GM10248 (cell line): ENCODE measurements at regions of chr4 and their contacts with region 1.

Region 1: DNA sequence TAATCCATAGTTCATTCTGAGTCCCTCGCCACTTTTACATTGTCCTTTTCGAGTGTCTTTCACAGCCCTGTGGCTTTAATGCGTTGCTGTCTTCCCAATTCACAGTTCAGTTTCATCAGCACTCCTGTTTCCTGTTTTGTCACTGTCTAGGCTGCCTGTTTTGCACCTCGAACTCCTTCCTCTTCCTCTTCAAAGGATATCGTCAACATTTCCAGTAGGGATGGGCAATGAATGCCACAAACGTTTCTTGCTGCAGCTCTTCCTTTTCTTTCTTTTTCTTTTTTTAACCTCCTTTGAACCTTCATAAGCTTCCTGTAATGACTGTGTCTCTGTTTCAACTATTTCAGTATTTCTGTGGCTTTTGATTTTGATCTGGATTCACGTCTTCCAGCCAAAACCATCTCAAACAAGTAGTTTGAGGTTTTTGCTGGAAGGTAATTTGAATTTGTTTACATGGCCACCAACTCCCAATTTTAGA is 105.4 kb downstream of the ANXA3 start:
- DNase-seq: no peak
- CTCF ChIP-seq: no peak

Region 2: DNA sequence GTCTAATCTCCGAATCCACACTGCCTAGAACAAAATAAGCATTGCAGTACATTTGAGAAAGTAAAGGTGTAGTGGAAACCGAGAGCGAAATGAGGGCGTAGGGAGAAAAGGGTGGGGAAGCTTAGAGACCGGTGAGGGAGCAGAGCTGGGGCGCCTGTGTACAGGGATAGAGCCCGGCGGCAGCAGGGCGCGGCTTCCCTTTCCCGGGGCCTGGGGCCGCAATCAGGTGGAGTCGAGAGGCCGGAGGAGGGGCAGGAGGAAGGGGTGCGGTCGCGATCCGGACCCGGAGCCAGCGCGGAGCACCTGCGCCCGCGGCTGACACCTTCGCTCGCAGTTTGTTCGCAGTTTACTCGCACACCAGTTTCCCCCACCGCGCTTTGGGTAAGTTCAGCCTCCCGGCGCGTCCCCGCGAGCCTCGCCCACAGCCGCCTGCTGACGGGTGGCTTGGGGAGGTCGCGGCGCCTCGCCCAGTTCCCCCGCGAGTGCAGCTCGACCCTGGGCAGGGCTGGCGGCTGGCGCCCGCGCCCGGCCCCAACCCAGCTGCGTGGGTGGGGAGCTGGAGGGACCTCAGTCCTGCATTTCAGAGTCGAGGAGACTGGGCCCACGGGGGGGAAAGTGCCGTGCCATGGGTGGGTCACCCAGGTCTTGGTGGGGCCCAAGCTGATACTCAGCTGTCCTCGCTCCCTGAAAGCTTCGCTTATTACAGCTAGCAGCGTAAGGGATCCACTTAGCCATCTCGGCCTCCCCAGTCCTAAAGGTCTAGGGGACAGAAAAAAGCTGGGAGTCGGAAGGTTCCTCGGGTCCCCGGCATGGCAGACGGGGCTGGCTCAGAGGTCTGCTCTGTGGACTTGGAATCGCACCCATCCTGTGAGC is 105.3 kb before region 1 on chr4 and contains the start of gene ANXA3:
- CTCF ChIA-PET with region 1: no interaction called
- POLR2A ChIA-PET with region 1: no interaction called
- DNase-seq: peak; percentile 29
- CTCF ChIP-seq: no peak

Region 3: GRCh38 chr4:78667764-78668163 is 10.8 kb after region 1 on chr4:
- CTCF ChIA-PET with region 1: interaction called, 11 read pairs
- POLR2A ChIA-PET with region 1: no interaction called
- DNase-seq: peak; percentile 24
- CTCF ChIP-seq: no peak